ENCODE measurements at regions of chr6 and their contacts with region 1.

Region 1: DNA sequence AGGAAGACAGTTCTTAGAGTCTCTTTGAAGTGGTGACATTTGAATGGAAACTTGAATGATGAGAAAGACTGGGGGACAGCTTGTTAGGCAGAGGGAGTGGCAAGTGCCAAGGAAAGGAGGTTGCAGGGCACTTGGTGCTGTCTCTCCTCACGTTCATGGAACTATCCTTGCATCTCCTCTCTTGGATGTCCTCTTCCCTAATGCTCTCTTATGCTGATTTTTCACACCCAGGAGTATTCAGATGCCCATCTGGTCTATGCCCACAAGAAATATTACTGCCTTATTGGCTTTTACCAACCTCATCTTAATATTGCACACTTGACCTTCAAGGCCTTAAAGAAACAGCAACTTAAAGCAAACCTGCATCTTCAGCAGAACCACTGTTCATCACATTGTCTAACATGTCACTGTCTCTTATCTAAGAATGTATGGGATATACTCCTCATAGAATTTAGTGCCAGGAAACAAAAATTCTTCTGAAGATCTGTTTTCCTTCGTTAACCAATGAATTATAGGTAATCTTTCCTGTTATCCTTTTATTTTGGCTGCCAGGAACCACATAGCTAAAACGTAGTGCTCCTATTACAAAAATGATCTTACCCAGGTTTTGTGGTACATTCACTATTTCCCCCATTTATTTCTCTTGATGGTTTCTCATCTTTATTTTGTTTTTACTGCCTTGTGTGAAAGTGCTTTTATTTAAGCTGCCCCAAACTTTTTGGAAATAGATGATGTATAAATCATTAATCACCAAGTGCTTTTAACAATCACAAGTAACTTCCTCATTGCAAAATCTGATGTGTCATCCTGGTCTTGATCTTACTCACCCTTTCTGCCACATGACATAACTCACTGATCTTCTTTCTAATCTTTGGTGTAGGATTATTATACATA is 12.8 kb downstream of the RGS17 start:
- DNase-seq: no peak
- ATAC-seq: no peak
- H3K4me3 ChIP-seq: no peak overlapping the region
- H3K4me3 Mint-ChIP-seq: no peak overlapping the region
- H3K27ac ChIP-seq: no peak overlapping the region
- H3K27ac Mint-ChIP-seq: no peak overlapping the region
- H3K4me1 ChIP-seq: no peaks in the 10 kb centered on the region
- H3K4me1 Mint-ChIP-seq: no peaks in the 10 kb centered on the region
- H3K27me3 ChIP-seq: no peaks in the 10 kb centered on the region
- H3K27me3 Mint-ChIP-seq: peaks cover 11 to 15% of the 10 kb centered on the region in 2 donors
- CTCF ChIP-seq: no peak

Region 2: GRCh38 chr6:152943260-152943896 is 174.9 kb before region 1 on chr6:
- intact Hi-C with region 1: no loop called
- DNase-seq: no peak
- ATAC-seq: no peak
- H3K4me3 ChIP-seq: no peak overlapping the region
- H3K4me3 Mint-ChIP-seq: no peak overlapping the region
- H3K27ac ChIP-seq: no peak overlapping the region
- H3K27ac Mint-ChIP-seq: no peak overlapping the region
- H3K4me1 ChIP-seq: no peaks in the 10 kb centered on the region
- H3K4me1 Mint-ChIP-seq: peaks cover 6 to 8% of the 10 kb centered on the region in 2 donors
- H3K27me3 ChIP-seq: peaks cover 4% of the 10 kb centered on the region
- H3K27me3 Mint-ChIP-seq: peaks cover 14 to 67% of the 10 kb centered on the region in 2 donors
- CTCF ChIP-seq: no peak

Region 3: DNA sequence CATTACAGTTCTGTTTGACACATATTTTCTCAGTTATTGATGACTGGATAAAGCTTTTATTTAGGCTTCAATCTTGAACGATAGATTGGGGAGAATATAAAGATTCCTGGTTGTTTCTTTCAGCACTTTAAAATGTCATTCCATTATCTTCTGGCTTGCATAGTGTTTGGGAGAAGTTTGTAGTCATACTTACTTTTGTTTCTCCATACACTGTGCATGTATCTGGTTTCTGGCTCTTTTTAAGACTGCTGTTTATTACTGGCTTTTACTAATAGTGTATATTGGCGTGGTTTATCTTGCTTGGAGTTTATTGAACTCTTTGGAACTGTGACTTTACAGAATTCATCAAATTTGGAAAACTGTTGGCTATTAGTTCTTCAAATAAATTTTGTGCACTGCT is 36.3 kb before region 1 on chr6:
- intact Hi-C with region 1: loop called (anchors 1 kb)
- DNase-seq: no peak
- ATAC-seq: no peak
- H3K4me3 ChIP-seq: no peak overlapping the region
- H3K4me3 Mint-ChIP-seq: no peak overlapping the region
- H3K27ac ChIP-seq: no peak overlapping the region
- H3K27ac Mint-ChIP-seq: no peak overlapping the region
- H3K4me1 ChIP-seq: no peaks in the 10 kb centered on the region
- H3K4me1 Mint-ChIP-seq: no peaks in the 10 kb centered on the region
- H3K27me3 ChIP-seq: no peaks in the 10 kb centered on the region
- H3K27me3 Mint-ChIP-seq: peaks cover 6% of the 10 kb centered on the region in 2 donors
- CTCF ChIP-seq: no peak